Activated CD8-positive, alpha-beta T cell treated with anti-CD3 and anti-CD28 coated beads for 36 hours (primary cell): ENCODE measurements at regions of chr4 and their contacts with region 1.

Region 1: DNA sequence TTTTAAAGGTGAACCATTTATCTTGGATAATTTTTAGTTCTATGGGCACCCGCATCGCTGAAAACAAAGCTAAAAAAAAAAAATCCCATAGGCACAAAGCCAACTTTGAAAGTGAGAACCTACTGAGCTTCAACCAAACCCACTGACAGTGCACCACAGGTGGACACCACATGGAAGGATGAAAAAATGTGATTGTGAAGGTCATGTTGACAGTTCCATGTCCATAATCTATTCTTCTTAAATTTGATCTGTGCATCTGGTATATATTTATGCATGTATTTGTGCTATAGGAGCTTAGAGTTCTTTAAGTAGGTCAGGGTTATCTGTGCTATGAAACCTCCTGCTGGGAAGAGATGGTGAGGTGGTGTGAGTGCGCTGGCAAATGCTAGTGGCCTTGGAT is 374.3 kb downstream of the SPRY1 start:
- DNase-seq: no peak
- ATAC-seq: no peak
- H3K4me3 Mint-ChIP-seq: no peak overlapping the region
- H3K27ac Mint-ChIP-seq: no peak overlapping the region
- H3K4me1 Mint-ChIP-seq: no peaks in the 10 kb centered on the region
- H3K27me3 Mint-ChIP-seq: peaks cover 5% of the 10 kb centered on the region
- CTCF ChIP-seq: no peak

Region 2: GRCh38 chr4:123830930-123831329 is 60.0 kb after region 1 on chr4:
- CTCF ChIA-PET with region 1: no interaction called
- POLR2A ChIA-PET with region 1: no interaction called
- intact Hi-C with region 1: no loop called
- DNase-seq: no peak
- ATAC-seq: no peak
- H3K4me3 Mint-ChIP-seq: no peak overlapping the region
- H3K27ac Mint-ChIP-seq: no peak overlapping the region
- H3K4me1 Mint-ChIP-seq: no peaks in the 10 kb centered on the region
- H3K27me3 Mint-ChIP-seq: no peaks in the 10 kb centered on the region
- CTCF ChIP-seq: no peak

Region 3: GRCh38 chr4:124262211-124263179 is 491.6 kb after region 1 on chr4:
- CTCF ChIA-PET with region 1: interaction called, 4 read pairs
- POLR2A ChIA-PET with region 1: no interaction called
- intact Hi-C with region 1: loop called (anchors 5 kb)
- DNase-seq: peak; percentile 68
- ATAC-seq: peak; percentile 68
- H3K4me3 Mint-ChIP-seq: no peak overlapping the region
- H3K27ac Mint-ChIP-seq: no peak overlapping the region
- H3K4me1 Mint-ChIP-seq: no peaks in the 10 kb centered on the region
- H3K27me3 Mint-ChIP-seq: no peaks in the 10 kb centered on the region
- CTCF ChIP-seq: peak; percentile 59